Endothelial cell of umbilical vein (primary cell): ENCODE measurements at regions of chr18 and their contacts with region 1.

Region 1: DNA sequence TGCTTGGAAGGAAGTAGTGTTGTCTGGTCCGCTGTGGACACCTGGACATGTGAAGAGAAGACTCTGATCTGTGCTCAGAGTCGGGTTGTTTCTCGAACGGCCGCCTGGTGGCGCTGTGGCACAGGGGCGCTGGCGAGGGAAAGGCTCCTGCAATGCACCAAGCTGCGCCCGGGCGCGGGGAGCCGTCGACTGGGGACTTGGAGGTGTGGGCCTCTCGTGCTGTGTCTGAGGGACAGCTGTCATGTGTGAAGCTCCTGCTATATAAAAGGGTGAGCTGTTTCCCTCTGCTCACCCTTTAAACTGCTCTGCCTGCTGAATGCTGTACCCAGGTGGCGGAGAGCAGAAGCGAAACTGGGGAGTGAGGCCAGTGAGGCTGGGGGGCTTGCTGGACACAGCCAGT is 44.0 kb downstream of the GNAL start:
- DNase-seq: peak; percentile 60
- H3K4me3 ChIP-seq: no peak overlapping the region
- H3K27ac ChIP-seq: no peak overlapping the region
- H3K4me1 ChIP-seq: no peaks in the 10 kb centered on the region
- H3K27me3 ChIP-seq: peaks cover 0 to 2% of the 10 kb centered on the region in 2 experiments
- CTCF ChIP-seq: peak; percentile 86 to 96
- POLR2A ChIP-seq: no peak

Region 2: DNA sequence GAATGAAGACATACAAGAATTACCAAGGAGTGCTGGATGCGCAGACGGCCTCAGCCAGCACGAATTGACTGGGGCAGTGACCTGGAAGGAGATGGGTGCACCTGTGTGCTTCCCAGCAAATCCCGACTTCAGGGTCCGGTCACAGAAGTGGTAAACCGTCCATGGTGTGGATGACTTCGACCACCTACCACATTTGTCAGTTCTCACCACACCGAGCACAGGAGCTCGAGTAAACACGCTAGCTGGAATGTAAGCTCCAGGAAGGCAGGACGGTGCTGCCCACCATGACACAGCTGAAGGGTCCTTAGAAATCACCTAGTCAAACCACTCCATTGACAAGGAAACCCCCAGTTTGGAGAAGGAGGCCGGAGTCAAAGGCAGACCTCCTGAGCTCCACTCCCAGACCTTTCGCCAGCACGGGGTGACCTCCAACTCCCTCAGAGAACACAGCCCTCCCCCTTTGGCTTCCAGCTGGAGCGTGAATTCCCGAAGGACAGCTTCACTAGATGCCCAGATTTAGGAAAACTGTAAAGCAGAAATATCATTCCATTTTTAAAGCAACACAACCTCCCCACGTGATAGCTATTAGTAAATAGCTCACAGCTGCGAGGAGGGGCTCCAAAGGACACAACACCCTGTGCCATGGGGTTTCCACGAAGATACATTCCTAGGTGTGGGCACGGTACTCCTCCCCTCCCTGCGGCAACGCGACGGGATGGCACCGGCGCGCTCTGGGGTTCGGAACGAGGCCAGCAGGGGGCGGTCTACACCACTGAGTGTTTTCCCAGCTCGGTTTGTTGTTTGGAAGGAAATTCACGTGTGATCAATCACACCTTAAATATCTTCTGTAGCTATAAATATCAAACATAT is 78.1 kb before region 1 on chr18:
- CTCF ChIA-PET with region 1: interaction called, 41 read pairs
- POLR2A ChIA-PET with region 1: no interaction called
- dilution Hi-C with region 1: no loop called
- intact Hi-C with region 1: loop called (anchors 1 kb)
- DNase-seq: peak; percentile 32
- H3K4me3 ChIP-seq: no peak overlapping the region
- H3K27ac ChIP-seq: no peak overlapping the region
- H3K4me1 ChIP-seq: no peaks in the 10 kb centered on the region
- H3K27me3 ChIP-seq: peaks cover 0 to 2% of the 10 kb centered on the region in 2 experiments
- CTCF ChIP-seq: peak; percentile 80 to 84
- POLR2A ChIP-seq: no peak

Region 3: DNA sequence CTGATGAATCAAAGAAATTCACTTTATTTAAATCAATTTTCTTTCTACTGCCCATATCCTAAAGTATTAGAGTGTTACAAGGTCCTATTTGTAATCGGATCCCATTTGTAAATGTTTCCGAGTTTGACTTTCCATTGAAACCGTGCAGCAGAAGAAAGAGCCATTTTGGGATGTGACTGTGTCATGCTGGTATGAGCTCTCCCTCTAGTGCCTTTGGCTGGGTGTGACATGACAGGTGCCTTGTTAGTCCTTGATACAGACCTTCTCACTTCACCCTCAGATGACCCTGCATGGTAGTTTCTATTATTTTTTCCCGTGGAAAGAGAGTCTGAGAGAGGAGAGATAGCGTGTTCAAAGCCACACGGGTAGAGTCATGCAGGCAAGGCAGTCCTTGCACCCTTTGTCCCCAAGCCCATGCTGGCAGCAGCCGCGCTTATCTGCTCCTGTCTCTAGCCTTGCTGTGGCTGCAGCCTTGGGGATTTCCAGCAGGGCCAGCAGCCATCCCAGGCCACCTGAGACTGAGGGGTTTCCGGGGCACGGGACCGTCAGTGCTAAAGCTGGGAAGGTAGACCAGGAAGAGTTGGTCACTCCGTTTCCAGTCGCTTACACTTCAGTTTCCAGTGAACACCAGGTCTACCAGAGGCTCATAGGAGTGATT is 139.6 kb after region 1 on chr18:
- CTCF ChIA-PET with region 1: interaction called, 33 read pairs
- POLR2A ChIA-PET with region 1: no interaction called
- dilution Hi-C with region 1: no loop called
- intact Hi-C with region 1: loop called (anchors 1 kb)
- DNase-seq: peak; percentile 12
- H3K4me3 ChIP-seq: no peak overlapping the region
- H3K27ac ChIP-seq: no peak overlapping the region
- H3K4me1 ChIP-seq: no peaks in the 10 kb centered on the region
- H3K27me3 ChIP-seq: peaks cover 0 to 6% of the 10 kb centered on the region in 2 experiments
- CTCF ChIP-seq: peak; percentile 6 to 9
- POLR2A ChIP-seq: no peak